ENCODE measurements at regions of chr18 and their contacts with region 1.

Region 1: GRCh38 chr18:63890950-63891304 is 3.4 kb downstream of the SERPINB2 start:
- DNase-seq: peak in 1 of 2 experiments; percentile 0
- H3K4me3 ChIP-seq: no peak overlapping the region
- H3K4me3 Mint-ChIP-seq: no peak overlapping the region
- H3K27ac Mint-ChIP-seq: no peak overlapping the region
- H3K4me1 ChIP-seq: no peaks in the 10 kb centered on the region
- H3K4me1 Mint-ChIP-seq: no peaks in the 10 kb centered on the region
- H3K27me3 ChIP-seq: no peaks in the 10 kb centered on the region
- H3K27me3 Mint-ChIP-seq: no peaks in the 10 kb centered on the region
- CTCF ChIP-seq: no peak

Region 2: DNA sequence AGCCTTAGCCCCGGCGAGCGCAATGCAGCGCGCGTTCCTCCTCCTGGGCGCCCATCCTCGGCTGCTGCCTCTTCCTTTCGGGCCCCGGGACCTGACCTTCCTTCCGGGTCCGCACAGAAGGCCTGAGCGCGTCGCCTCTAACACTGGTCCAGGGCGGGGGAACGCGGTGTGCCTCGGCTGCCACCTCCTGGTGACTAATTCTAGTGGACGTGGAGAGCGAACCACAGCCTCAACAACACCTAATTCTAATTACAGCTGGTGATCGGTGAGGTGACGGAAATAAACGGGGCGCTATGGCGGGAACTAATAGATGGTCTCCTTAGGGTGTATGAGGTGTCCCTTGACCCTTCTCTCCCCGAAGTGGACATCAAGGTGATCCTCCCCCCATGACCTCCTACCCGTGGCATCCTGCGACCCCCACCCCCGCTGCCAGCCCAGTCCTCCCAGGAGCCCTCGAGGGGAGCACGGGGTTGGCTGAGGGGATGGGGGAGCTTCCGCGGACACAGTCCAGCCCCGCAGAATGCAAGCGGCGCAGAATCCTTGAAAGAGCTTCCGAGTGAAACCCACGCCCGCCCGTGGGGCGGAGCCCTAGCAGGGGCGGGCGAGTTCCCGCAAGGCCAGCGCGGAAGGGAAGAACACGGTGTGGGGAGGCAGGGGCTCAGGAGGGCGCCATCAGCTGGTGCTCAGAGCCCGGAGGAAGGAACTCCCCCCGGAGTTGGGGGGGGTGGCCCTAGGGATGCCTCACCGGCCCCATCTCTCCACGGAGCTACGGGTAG is 45.4 kb after region 1 on chr18:
- CTCF ChIA-PET with region 1: interaction called, 3 read pairs
- POLR2A ChIA-PET with region 1: no interaction called
- intact Hi-C with region 1: loop called (anchors 1 kb)
- DNase-seq: peak; percentile 51 to 61
- H3K4me3 ChIP-seq: no peak overlapping the region
- H3K4me3 Mint-ChIP-seq: no peak overlapping the region
- H3K27ac Mint-ChIP-seq: no peak overlapping the region
- H3K4me1 ChIP-seq: no peaks in the 10 kb centered on the region
- H3K4me1 Mint-ChIP-seq: no peaks in the 10 kb centered on the region
- H3K27me3 ChIP-seq: no peaks in the 10 kb centered on the region
- H3K27me3 Mint-ChIP-seq: no peaks in the 10 kb centered on the region
- CTCF ChIP-seq: peak in 1 of 2 experiments; percentile 31

Region 3: DNA sequence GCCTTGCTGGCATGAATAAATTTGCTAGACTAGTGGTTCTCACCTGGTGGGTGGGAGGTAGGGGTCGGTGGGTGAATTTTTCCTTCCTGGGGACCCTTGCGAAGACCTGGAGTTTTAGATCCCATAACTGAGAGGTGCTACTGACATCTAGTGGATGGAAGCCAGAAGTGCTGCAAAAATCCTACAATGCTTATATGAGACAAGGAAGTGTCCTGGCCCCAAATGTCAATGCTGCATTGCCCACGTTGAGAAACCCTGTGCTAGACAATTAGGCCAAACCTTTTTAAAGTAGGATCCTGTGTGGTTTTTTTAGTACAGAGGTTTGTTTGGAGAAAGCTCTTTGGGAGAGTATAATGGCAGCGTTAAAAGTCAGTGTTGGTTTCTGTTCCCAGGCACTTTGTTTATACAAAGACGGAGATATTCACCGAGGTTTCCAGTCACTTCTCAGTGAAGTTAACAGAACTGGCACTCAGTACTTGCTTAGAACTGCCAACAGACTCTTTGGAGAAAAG is 88.5 kb after region 1 on chr18:
- CTCF ChIA-PET with region 1: no interaction called
- POLR2A ChIA-PET with region 1: no interaction called
- intact Hi-C with region 1: loop called (anchors 1 kb)
- DNase-seq: peak; percentile 47 to 48
- H3K4me3 ChIP-seq: no peak overlapping the region
- H3K4me3 Mint-ChIP-seq: no peak overlapping the region
- H3K27ac Mint-ChIP-seq: no peak overlapping the region
- H3K4me1 ChIP-seq: no peaks in the 10 kb centered on the region
- H3K4me1 Mint-ChIP-seq: no peaks in the 10 kb centered on the region
- H3K27me3 ChIP-seq: no peaks in the 10 kb centered on the region
- H3K27me3 Mint-ChIP-seq: no peaks in the 10 kb centered on the region
- CTCF ChIP-seq: peak; percentile 47 to 63

Region 4: DNA sequence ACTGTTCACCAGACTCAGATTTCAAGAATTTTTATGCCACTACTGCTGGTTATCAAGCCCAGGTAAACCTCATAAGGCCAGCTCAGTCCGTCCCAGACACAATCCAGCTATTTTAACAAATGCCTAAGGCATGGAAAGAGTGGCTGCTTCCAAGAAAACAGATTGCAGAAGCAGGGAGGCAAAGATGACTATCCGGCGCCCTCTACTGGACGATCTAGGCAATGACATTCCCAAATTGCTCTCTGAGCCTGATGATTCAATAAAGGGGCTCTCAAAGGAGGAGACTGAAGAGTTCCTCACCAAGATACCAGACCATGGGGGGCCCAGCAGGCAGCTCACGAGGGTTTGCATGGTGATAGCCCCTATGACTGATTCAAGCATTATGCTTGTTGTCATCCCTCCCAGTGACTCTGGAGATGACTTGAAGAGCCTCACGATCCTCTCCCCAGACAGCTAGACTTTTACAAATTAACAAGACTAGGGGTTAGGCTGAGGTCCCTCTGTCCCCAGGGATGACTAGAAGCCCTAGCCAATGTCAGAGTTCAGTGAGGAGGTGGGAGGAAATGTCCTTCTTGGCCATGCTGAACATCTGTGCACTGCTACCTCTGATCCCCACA is 104.0 kb after region 1 on chr18:
- CTCF ChIA-PET with region 1: no interaction called
- POLR2A ChIA-PET with region 1: no interaction called
- intact Hi-C with region 1: loop called (anchors 1 kb)
- DNase-seq: peak in 1 of 2 experiments; percentile 30
- H3K4me3 ChIP-seq: no peak overlapping the region
- H3K4me3 Mint-ChIP-seq: no peak overlapping the region
- H3K27ac Mint-ChIP-seq: no peak overlapping the region
- H3K4me1 ChIP-seq: no peaks in the 10 kb centered on the region
- H3K4me1 Mint-ChIP-seq: no peaks in the 10 kb centered on the region
- H3K27me3 ChIP-seq: no peaks in the 10 kb centered on the region
- H3K27me3 Mint-ChIP-seq: no peaks in the 10 kb centered on the region
- CTCF ChIP-seq: peak; percentile 45 to 54